HCT116 (cell line): ENCODE measurements at regions of chr1 and their contacts with region 1.

Region 1: GRCh38 chr1:45843474-45843905 is 40.1 kb downstream of the MAST2 start:
- DNase-seq: no peak
- ATAC-seq: no peak
- H3K4me3 ChIP-seq: no peak overlapping the region
- H3K27ac ChIP-seq: no peak overlapping the region
- H3K4me1 ChIP-seq: peaks cover 0 to 3% of the 10 kb centered on the region in 2 experiments; a peak in 1 of 4 replicates
- H3K27me3 ChIP-seq: no peaks in the 10 kb centered on the region
- CTCF ChIP-seq: peak in 1 of 3 experiments; percentile 18; a peak in 2 of 6 replicates
- POLR2A ChIP-seq: no peak
- RAD21 ChIP-seq: peak; percentile 46; the same call in 1 of the 2 replicates

Region 2: DNA sequence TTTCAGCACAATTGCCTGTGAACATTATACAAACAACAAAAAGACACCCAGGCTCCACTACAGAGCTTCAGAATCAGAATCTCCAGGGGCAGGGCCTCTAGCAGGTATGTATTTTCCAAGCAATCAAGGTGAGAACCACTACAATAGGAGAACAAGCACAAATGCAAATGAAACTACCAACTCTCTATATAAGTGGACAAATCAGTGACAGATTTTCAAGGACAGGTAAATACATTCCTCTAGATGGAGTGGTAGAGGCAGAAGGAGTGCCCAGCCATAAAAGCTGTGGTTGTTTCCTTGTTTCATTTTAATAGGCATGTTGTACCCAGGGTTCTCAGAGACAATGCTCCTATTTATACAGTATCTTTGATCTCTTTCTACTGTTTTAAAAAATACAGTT is 199.5 kb before region 1 on chr1:
- CTCF ChIA-PET with region 1: no interaction called
- POLR2A ChIA-PET with region 1: no interaction called
- RAD21 ChIA-PET with region 1: no interaction called
- intact Hi-C with region 1: loop called (anchors 10 kb)
- DNase-seq: peak; percentile 8
- ATAC-seq: peak; percentile 85
- H3K4me3 ChIP-seq: no peak overlapping the region
- H3K27ac ChIP-seq: peak overlapping the region; percentile 2; the same call in 1 of the 2 replicates
- H3K4me1 ChIP-seq: peaks cover 3 to 7% of the 10 kb centered on the region in 2 experiments; a peak in 3 of 4 replicates
- H3K27me3 ChIP-seq: no peaks in the 10 kb centered on the region
- CTCF ChIP-seq: peak; percentile 28 to 48 (median 32); a peak in 4 of 6 replicates
- POLR2A ChIP-seq: no peak
- RAD21 ChIP-seq: peak; percentile 55

Region 3: DNA sequence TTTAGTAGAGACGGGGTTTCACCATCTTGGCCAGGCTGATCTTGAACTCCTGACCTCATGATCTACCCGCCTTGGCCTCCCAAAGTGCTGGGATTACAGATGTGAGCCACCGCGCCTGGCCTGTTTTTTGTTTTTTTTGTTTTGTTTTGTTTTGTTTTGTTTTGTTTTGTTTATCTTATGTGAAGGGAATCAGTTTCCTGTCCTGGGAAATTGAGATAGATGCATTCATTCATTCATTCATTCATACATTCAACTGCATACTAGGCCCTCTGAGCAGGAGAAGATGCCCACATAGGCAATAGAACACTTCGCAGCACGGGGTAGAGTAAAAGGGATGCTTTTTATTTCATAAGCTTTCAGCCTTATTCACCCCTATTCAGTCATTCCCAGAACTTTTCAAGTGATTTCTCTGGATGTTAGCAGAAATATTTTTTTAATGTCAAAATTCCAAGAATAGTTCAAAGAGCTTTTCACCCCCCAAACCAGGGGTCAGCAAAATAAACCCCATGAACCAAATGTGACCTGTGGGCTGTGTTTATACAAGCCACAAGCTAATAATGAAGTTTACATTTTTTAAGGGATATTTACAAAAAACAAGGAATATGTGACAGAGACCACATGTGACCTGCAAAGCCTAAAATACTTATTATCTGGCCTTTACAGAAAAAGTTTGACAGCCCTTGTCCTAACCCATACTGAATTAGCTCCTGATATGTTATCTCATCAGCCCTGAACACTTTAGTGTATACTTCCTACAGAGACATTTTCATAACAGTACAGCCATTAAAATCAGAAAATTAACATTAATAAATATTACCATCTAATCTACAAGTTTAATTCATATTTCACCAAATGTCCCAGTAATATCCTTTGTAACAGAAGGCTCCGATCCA is 87.0 kb after region 1 on chr1:
- CTCF ChIA-PET with region 1: no interaction called
- POLR2A ChIA-PET with region 1: no interaction called
- RAD21 ChIA-PET with region 1: no interaction called
- intact Hi-C with region 1: no loop called
- DNase-seq: no peak
- ATAC-seq: no peak
- H3K4me3 ChIP-seq: no peak overlapping the region
- H3K27ac ChIP-seq: peak overlapping the region; percentile 73; the same call in 1 of the 2 replicates
- H3K4me1 ChIP-seq: peaks cover 33 to 62% of the 10 kb centered on the region in 2 experiments
- H3K27me3 ChIP-seq: no peaks in the 10 kb centered on the region
- CTCF ChIP-seq: no peak
- POLR2A ChIP-seq: no peak
- RAD21 ChIP-seq: no peak